ENCODE measurements at regions of chr9 and their contacts with region 1.

Region 1: GRCh38 chr9:4762108-4762885 is 21.3 kb upstream of the AK3 start:
- DNase-seq: no peak
- H3K4me3 ChIP-seq: no peak overlapping the region
- CTCF ChIP-seq: peak; percentile 72

Region 2: DNA sequence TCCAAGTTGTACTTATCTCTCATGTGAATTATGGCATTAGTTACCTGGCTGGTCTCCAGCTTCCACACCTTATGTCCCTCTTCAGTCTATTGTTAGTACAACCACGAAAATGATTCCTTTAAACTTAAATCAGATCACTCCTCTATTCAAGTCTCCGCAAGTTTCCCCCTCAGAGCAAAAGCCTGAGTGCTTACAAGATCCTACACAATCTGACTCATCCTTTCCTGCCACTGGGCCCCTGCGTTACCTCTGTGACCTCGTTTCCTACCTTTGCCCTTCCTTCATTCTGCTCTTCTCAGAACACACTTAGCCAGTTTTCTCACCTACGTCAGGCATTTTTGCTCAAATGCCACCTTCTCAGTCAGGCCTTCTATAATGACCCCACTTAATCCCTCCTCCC is 417.4 kb before region 1 on chr9:
- CTCF ChIA-PET with region 1: no interaction called
- POLR2A ChIA-PET with region 1: no interaction called
- DNase-seq: no peak
- H3K4me3 ChIP-seq: no peak overlapping the region
- CTCF ChIP-seq: no peak

Region 3: DNA sequence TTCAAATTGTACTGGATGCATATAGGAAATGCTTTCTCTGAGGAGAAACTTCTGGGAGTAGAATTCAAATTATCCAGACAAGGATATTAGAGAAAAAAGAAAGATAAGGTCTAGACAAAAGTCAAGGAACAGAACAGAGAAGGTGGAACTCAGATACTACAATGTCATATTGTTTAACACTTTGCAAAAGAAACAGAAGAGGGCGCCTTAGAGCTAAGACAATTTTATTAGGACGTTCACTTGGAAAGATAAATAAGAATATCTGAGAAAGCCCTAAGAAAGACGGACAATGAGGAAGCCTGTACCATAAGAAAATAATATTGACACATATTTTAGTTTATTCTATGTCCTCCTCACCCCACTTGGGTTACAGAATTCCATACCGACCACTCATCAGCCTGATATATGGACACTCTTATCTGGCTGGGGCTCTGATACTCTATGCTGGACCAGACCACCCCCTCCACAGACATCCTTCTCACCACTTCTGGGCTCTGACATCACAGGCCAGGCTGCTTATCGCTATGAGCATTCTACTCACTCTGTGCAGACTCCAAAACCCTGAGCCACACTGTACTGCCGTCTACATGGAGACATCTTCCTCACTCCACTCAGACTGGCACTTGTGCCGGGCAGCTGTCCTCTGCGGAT is 12.1 kb before region 1 on chr9:
- CTCF ChIA-PET with region 1: interaction called, 105 read pairs
- POLR2A ChIA-PET with region 1: no interaction called
- DNase-seq: no peak
- H3K4me3 ChIP-seq: no peak overlapping the region
- CTCF ChIP-seq: peak; percentile 40

Region 4: GRCh38 chr9:4792572-4793458 is 30.5 kb after region 1 on chr9 and contains the start of gene RCL1:
- CTCF ChIA-PET with region 1: interaction called, 16 read pairs
- POLR2A ChIA-PET with region 1: no interaction called
- DNase-seq: peak; percentile 45
- H3K4me3 ChIP-seq: peak within 1 kb of the TSS; percentile 93
- CTCF ChIP-seq: no peak

Region 5: DNA sequence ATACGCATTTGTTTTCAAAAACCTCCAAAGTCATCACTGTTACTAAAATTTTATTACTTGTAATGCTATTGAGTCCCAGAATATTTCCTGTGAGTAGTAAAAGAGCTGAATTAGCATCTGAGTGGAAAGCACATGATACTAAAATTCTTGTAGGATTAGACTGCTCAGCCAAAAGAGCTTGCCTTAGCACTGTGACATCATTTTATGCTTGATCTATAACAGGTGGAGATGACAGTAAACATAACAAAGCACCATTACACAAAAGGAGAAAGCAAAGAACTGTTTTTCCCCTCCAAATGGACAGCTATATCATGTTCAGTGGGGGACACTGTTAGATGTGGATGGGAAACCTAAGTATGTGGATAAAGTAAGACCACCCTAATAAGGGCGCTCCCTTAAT is 216.9 kb after region 1 on chr9:
- CTCF ChIA-PET with region 1: interaction called, 160 read pairs
- POLR2A ChIA-PET with region 1: no interaction called
- DNase-seq: no peak
- H3K4me3 ChIP-seq: no peak overlapping the region
- CTCF ChIP-seq: no peak

Region 6: GRCh38 chr9:4994166-4994890 is 232.0 kb after region 1 on chr9:
- CTCF ChIA-PET with region 1: interaction called, 160 read pairs
- POLR2A ChIA-PET with region 1: no interaction called
- DNase-seq: no peak
- H3K4me3 ChIP-seq: no peak overlapping the region
- CTCF ChIP-seq: no peak